ENCODE measurements at regions of chr17 and their contacts with region 1.

Region 1: GRCh38 chr17:49959183-49959935 is 9.6 kb upstream of the DLX4 start:
- DNase-seq: no peak
- H3K4me3 ChIP-seq: no peak overlapping the region
- H3K4me3 Mint-ChIP-seq: peak overlapping the region in 1 of 2 donors; percentile 56
- H3K27ac ChIP-seq: no peak overlapping the region
- H3K27ac Mint-ChIP-seq: peak overlapping the region in 1 of 7 donors; percentile 62
- H3K4me1 ChIP-seq: peaks cover 17 to 23% of the 10 kb centered on the region in 2 donors
- H3K4me1 Mint-ChIP-seq: peaks cover 25% of the 10 kb centered on the region
- H3K27me3 ChIP-seq: peaks cover 22 to 63% of the 10 kb centered on the region in 2 donors
- H3K27me3 Mint-ChIP-seq: peaks cover 58 to 84% (median 65%) of the 10 kb centered on the region in 3 donors
- CTCF ChIP-seq: no peak

Region 2: DNA sequence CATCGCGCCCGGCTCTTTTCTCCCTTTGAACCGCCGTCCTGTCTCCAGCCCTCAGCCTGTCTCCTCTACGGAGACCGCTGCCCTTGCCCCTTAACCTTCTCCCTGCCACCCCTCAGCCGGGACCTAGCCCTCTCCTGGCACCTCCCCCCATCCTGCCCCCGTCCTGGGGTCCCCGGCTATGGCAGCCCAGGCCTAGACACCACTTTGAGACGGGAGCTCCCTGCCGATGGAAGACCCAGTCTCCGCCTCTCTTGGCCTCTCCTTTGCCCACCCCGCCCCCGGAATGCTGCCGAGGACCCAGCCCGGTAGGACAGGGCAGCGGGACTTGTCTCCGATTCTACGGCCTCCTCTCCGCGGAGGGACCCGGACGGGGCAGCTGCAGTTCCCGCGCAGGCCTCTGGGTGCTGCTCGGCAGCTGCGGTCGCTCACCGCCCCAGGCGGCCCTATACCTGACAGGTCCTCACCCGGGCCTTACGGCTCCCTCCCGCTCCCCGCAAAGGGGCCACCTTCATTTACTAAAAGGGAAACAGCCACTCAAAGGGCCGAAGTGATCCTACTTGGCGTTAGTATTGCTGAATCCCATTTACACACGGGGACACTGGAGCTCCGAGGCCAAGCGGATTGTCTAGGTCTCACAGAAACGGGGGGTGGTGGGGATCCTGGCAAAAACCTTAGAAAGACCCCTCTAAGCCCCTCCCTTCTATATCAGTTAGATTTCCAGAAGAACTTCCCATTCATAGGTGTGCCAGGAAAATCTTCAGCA is 78.9 kb before region 1 on chr17:
- intact Hi-C with region 1: loop called in 1 of 2 experiments (anchors 5 kb)
- DNase-seq: peak; percentile 45 to 57 (median 54)
- H3K4me3 ChIP-seq: no peak overlapping the region
- H3K4me3 Mint-ChIP-seq: peak overlapping the region in 1 of 2 donors; percentile 75
- H3K27ac ChIP-seq: no peak overlapping the region
- H3K27ac Mint-ChIP-seq: no peak overlapping the region
- H3K4me1 ChIP-seq: peaks cover 4 to 5% of the 10 kb centered on the region in 2 donors
- H3K4me1 Mint-ChIP-seq: peaks cover 6% of the 10 kb centered on the region
- H3K27me3 ChIP-seq: peaks cover 21 to 46% of the 10 kb centered on the region in 2 donors
- H3K27me3 Mint-ChIP-seq: peaks cover 44 to 70% (median 69%) of the 10 kb centered on the region in 3 donors
- CTCF ChIP-seq: peak; percentile 98

Measured in CD14-positive monocyte (primary cell).